Psoas muscle (tissue), 8 donors: ENCODE measurements at regions of chr17 and their contacts with region 1.

Region 1: DNA sequence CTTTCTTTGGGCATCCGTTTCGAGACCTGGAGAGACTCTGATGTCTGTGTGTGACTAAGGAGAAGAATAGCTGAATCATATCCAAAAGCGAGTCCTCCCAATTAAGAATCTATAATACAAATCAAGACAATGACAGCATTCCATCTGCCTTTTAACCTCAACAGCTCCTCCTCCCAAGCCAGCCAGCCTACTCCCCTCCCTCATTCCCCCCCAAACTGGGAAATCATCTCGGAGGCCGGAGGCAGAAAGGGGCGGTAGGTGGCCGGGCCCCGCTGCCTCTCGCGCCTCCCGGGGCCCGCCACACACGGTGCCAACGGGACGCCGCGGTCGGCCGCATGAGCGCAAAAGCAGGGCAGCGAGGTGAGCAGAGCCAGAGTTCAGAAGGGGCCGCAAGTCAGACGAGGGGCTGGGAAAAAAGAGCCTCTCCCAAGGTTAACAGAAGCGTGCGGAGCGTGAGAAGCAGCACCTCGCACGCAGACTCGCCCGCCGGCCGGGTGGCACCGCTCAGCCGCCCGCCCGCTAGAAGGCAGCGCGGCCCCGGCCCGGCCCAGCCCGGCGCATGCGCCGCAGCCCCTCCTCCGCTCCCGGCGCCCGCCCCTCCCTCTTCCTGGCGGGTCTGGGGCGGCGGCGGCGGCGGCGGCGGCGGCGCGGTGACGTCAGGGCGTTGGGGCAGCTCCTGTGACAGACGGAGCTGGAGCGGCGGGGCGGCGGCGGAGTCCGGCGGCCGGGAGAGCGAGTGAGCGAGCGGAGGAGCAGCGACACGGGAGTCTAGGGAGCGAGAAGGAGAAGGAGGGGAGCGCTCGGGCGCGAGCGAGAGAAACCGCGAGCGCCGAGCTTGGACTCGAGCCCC is at the start of gene PAFAH1B1:
- DNase-seq: peak; percentile 94 to 97
- ATAC-seq: peak; percentile 90 to 94 (median 92)
- H3K4me3 ChIP-seq: peak within 1 kb of the TSS; percentile 100
- H3K27ac ChIP-seq: peak within 1 kb of the TSS; percentile 99
- H3K4me1 ChIP-seq: peaks cover 35% of the 10 kb centered on the region
- H3K27me3 ChIP-seq: no peaks in the 10 kb centered on the region
- CTCF ChIP-seq: peak; percentile 24
- total RNA-seq, gene PAFAH1B1: 118 to 168 (median 147) TPM

Region 2: GRCh38 chr17:2500446-2500845 is 92.8 kb before region 1 on chr17:
- intact Hi-C with region 1: loop called in 1 of 2 experiments (anchors 10 kb)
- DNase-seq: no peak
- ATAC-seq: no peak
- H3K4me3 ChIP-seq: no peak overlapping the region
- H3K27ac ChIP-seq: no peak overlapping the region
- H3K4me1 ChIP-seq: no peaks in the 10 kb centered on the region
- H3K27me3 ChIP-seq: no peaks in the 10 kb centered on the region
- CTCF ChIP-seq: no peak

Region 3: DNA sequence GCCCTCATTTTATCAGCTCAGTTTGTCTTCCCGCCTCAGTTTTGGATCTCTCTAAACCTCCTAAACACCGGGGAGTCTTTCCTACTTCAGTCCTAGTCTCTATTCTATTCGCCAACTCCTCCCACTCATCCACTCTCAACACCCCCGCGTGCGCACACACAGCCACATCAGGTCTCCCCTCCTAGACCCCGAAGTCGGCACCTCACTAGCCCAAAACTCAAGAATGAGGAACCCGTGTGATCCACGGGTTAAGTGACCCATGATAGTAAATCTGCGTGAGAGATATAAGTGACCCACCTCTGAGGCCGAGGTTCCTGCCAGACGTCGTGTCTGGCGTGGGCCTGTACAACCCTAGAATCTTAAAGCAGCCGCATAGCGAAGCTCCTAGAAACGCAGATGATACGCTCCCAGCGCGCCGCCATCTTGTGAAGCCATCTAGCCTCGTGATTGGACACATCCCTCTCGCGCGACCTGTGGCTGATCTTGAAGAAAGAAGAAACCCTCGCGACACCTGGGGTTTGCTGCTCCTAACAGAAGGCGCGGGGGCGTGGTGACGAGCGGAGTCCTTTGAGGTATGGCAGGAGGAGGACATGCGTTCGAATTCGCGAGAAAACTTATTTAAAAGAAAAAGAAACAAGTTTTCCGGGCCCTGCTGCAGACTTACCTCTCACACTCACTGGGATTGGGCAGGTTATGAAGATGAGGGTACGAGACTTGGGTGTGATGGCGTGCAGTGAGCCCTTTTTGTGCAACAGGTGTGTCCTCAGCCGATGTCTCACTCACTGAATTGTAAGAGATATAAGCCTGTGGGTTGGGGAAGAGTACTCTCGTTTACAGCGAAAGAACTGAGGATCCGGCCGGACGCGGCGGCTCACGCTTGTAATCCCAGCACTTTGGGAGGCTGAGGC is 81.5 kb before region 1 on chr17 and contains the start of gene METTL16:
- intact Hi-C with region 1: loop called (anchors 2 to 10 kb)
- DNase-seq: peak; percentile 97
- ATAC-seq: peak; percentile 99 to 100 (median 100)
- H3K4me3 ChIP-seq: peak within 1 kb of the TSS; percentile 93
- H3K27ac ChIP-seq: peak within 1 kb of the TSS; percentile 91
- H3K4me1 ChIP-seq: peaks cover 20% of the 10 kb centered on the region
- H3K27me3 ChIP-seq: no peaks in the 10 kb centered on the region
- CTCF ChIP-seq: no peak
- total RNA-seq, gene METTL16: 20.9 to 33.0 (median 24.0) TPM

Region 4: GRCh38 chr17:2634361-2634960 is 41.3 kb after region 1 on chr17:
- intact Hi-C with region 1: loop called (anchors 5 kb)
- DNase-seq: peak in 1 of 2 donors; percentile 67
- ATAC-seq: peak; percentile 76 to 93 (median 90)
- H3K4me3 ChIP-seq: no peak overlapping the region
- H3K27ac ChIP-seq: peak overlapping the region; percentile 88
- H3K4me1 ChIP-seq: peaks cover 60% of the 10 kb centered on the region
- H3K27me3 ChIP-seq: no peaks in the 10 kb centered on the region
- CTCF ChIP-seq: no peak

Region 5: GRCh38 chr17:2672026-2672425 is 78.8 kb after region 1 on chr17:
- intact Hi-C with region 1: loop called (anchors 10 kb)
- DNase-seq: no peak
- ATAC-seq: no peak
- H3K4me3 ChIP-seq: no peak overlapping the region
- H3K27ac ChIP-seq: no peak overlapping the region
- H3K4me1 ChIP-seq: no peaks in the 10 kb centered on the region
- H3K27me3 ChIP-seq: no peaks in the 10 kb centered on the region
- CTCF ChIP-seq: no peak

Region 6: DNA sequence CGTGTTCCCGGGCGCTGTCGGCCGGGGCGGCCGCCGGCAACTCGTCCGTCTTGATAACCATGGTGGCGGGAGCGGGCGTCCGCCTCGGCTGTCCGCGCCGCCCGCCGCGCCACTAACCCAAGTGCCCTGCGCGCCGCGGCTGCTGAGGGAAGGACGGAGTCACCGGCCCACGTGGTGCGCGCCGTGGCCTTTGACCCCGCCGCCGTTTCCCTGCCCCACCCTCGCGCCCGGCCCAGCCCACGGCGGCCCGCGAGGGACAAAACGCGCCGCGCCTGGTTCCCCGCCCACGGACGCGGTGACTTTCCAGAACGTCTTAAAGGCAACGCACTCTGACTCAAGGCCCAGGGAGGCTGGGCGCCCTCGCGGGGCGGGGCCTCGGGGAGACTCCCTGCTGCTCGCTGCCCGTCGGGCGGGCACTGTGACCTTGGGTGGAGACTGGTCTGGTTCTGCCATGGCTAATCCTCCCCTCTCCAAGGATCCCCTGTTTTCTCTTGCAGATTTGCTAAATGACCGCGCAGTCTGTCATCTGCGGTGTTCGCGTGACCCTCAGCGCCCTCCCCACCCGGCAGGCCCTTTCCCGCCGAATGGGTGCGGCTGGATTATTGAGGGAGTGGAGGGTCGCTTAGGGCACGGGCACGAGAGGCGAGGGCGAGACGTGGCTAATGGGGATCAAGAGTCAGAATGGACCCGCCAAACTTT is 118.6 kb after region 1 on chr17 and contains the start of gene CLUH:
- intact Hi-C with region 1: loop called (anchors 2 to 5 kb)
- DNase-seq: peak; percentile 98 to 99
- ATAC-seq: peak; percentile 74 to 80 (median 79)
- H3K4me3 ChIP-seq: peak within 1 kb of the TSS; percentile 82
- H3K27ac ChIP-seq: peak within 1 kb of the TSS; percentile 91
- H3K4me1 ChIP-seq: peaks cover 43% of the 10 kb centered on the region
- H3K27me3 ChIP-seq: no peaks in the 10 kb centered on the region
- CTCF ChIP-seq: no peak
- total RNA-seq, gene CLUH: 105 to 218 (median 132) TPM